Sigmoid colon (tissue), 7 donors: ENCODE measurements at regions of chr5 and their contacts with region 1.

Region 1: DNA sequence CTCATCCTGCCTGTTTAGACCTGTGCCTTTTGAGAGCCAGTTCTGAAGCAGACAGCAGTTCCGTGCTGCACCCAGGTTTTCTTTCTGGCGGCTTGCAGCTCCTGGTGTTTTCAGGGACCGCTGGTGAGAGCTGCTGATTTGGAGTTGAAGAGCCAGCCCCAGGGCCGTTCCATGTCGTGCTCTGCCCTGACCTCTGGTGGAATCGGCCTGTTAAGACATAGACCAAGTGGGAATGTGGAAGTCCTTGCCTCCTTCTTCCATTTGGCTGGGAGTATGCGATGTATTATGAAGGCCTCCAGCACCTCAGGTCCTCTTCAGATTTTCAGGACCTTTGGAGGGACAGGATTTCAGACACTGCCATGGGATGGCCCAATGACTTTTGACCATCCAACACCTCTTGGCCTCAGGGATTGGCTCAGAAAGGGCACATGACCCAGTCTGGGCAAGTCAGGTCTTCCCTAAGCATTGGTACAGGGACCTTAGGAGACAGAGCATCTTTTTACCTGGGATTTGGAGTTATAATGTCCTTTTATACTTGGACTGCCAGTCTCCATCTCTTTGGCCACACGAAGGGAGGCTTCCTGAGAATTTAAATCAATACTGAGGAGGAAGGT is 136.1 kb upstream of the CLINT1 start:
- DNase-seq: peak; percentile 88
- H3K4me3 ChIP-seq: no peak overlapping the region
- H3K27ac ChIP-seq: peak overlapping the region in 3 of 4 donors; percentile 8 to 45 (median 37)
- H3K4me1 ChIP-seq: peaks cover 0 to 9% (median 5%) of the 10 kb centered on the region in 4 donors
- H3K27me3 ChIP-seq: no peaks in the 10 kb centered on the region
- CTCF ChIP-seq: peak; percentile 74 to 80 (median 78)
- EP300 ChIP-seq: no peak
- POLR2A ChIP-seq: no peak

Region 2: DNA sequence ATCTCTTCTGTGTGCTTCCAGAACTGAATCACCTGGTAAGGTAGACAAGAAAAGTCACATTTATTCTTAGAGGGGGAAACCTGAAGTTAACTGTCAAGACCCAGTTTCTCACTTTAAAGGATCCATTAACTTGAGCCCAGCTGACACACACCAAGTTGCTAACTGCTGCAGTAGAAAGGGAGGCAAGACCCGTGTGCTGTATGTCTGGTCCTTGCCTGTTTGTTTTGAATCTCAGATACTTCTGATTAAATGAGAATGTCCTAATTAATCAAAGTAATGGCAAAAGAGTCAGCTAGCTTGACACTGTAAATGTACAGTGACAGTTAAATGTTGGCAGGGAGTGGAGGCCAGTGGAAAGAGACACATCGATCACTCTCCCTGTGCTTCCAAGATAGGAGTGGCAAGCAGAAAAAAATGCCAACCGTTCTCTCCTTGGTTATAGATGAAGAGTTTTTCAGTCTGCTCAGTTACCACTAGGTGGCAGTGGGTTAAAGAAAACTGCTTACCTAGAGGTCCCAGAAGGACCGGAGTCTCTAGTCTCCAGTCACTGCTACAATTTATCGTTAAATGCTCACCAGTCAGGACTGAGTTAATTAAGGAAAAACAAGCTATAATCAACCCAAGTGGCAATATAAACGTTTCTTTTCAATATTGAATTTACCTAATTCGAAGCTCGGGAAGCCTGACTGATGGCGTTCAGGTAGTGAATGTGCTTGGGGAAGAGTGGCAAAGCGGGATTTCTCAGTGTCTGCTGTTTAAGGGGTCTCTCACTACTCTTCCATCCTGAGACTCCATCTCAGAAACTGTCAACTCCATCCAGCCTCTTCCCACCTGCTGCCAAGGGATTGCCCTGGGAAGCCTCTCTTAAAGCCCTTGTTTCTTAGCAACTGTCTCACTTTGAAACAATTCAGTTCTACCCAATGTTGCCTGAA is 233.1 kb before region 1 on chr5:
- intact Hi-C with region 1: loop called (anchors 5 kb)
- DNase-seq: no peak
- H3K4me3 ChIP-seq: no peak overlapping the region
- H3K27ac ChIP-seq: no peak overlapping the region
- H3K4me1 ChIP-seq: peaks cover 0 to 12% (median 4%) of the 10 kb centered on the region in 4 donors
- H3K27me3 ChIP-seq: no peaks in the 10 kb centered on the region
- CTCF ChIP-seq: peak; percentile 44 to 78 (median 69)
- EP300 ChIP-seq: no peak
- POLR2A ChIP-seq: no peak

Region 3: GRCh38 chr5:157858527-157859226 is 136.3 kb before region 1 on chr5 and contains the start of gene CLINT1:
- intact Hi-C with region 1: loop called (anchors 2 kb)
- DNase-seq: peak; percentile 95
- H3K4me3 ChIP-seq: peak within 1 kb of the TSS; percentile 68 to 96 (median 87)
- H3K27ac ChIP-seq: peak within 1 kb of the TSS; percentile 85 to 91 (median 89)
- H3K4me1 ChIP-seq: peaks cover 0 to 42% (median 33%) of the 10 kb centered on the region in 4 donors
- H3K27me3 ChIP-seq: no peaks in the 10 kb centered on the region
- CTCF ChIP-seq: no peak
- EP300 ChIP-seq: no peak
- POLR2A ChIP-seq: peak; percentile 54 to 73
- total RNA-seq, gene CLINT1: 88.1 to 171 (median 109) TPM

Region 4: DNA sequence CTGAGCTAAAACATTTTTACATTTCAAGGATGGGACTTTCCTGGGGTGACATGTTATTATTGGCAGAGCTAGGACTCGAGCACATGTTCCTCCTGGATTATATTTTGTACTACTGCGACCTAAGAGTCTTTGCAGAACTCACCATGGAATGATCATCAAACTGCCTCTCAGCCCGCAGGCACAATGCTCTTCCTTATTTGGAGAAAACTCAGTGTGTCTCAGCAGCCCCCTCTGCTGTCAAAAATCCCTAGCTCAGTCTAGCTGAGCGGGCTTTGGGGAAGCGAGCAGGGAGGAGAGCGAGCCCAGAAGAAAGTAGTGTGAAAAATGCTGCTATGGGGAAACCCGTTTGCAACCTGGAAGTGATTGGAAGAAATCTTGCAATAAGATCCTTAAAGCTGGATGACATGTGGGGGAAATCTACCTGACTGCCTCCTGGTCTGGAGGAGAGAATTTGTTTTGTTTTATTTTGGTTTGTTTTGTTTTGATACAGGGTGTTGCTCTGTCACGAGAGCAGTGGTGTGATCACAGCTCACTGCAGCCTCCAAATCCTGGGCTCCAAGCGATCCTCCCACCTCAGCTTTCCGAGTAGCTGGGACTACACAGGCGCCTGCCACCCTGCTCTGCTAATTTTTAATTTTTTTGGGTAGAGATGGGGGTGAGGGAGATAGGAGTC is 46.1 kb before region 1 on chr5:
- intact Hi-C with region 1: loop called (anchors 2 kb)
- DNase-seq: peak; percentile 96
- H3K4me3 ChIP-seq: peak overlapping the region in 2 of 4 donors; percentile 4 to 7
- H3K27ac ChIP-seq: peak overlapping the region; percentile 77 to 84 (median 79)
- H3K4me1 ChIP-seq: peaks cover 0 to 18% (median 7%) of the 10 kb centered on the region in 4 donors
- H3K27me3 ChIP-seq: no peaks in the 10 kb centered on the region
- CTCF ChIP-seq: peak; percentile 69 to 82 (median 76)
- EP300 ChIP-seq: peak; percentile 31 to 95 (median 76)
- POLR2A ChIP-seq: no peak